A549 (cell line): ENCODE measurements at regions of chr19 and their contacts with region 1.

Region 1: DNA sequence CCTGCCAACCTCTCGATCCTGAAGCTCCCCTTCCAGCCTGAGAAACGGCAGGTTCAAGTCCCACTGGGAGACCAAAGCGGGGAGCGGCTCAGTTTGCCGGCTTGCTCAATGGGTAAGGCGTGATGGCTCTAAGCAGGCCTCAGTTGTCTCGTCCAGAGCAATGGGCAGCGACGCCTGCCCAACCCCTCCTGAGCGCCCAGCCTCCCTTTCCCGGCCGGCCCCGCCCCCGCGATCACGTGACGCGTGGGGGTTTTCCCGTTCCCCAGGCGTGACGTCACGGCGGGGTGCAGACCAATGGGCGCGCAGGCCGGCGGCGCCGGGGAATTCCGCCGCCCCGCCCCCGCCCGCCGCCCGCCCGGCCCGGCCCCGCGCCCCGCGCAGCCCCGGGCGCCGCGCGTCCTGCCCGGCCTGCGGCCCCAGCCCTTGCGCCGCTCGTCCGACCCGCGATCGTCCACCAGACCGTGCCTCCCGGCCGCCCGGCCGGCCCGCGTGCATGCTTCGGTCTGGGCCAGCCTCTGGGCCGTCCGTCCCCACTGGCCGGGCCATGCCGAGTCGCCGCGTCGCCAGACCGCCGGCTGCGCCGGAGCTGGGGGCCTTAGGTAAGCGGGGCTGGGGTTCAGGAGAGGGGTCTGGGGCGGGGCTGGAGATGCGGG is at the start of gene RELB:
- DNase-seq: peak; percentile 93 to 99
- ATAC-seq: peak; percentile 66 to 78
- H3K4me3 ChIP-seq: peak within 1 kb of the TSS; percentile 96
- H3K27ac ChIP-seq: peak within 1 kb of the TSS; percentile 83 to 95
- H3K4me1 ChIP-seq: peaks cover 7% of the 10 kb centered on the region; the same call in 1 of the 3 replicates
- CTCF ChIP-seq: no peak
- EP300 ChIP-seq: no peak
- POLR2A ChIP-seq: no peak; the same call in 1 of the 2 replicates
- RAD21 ChIP-seq: no peak
- polyA plus RNA-seq, gene RELB: 7.5 and 8.1 TPM in 2 replicates

Region 2: DNA sequence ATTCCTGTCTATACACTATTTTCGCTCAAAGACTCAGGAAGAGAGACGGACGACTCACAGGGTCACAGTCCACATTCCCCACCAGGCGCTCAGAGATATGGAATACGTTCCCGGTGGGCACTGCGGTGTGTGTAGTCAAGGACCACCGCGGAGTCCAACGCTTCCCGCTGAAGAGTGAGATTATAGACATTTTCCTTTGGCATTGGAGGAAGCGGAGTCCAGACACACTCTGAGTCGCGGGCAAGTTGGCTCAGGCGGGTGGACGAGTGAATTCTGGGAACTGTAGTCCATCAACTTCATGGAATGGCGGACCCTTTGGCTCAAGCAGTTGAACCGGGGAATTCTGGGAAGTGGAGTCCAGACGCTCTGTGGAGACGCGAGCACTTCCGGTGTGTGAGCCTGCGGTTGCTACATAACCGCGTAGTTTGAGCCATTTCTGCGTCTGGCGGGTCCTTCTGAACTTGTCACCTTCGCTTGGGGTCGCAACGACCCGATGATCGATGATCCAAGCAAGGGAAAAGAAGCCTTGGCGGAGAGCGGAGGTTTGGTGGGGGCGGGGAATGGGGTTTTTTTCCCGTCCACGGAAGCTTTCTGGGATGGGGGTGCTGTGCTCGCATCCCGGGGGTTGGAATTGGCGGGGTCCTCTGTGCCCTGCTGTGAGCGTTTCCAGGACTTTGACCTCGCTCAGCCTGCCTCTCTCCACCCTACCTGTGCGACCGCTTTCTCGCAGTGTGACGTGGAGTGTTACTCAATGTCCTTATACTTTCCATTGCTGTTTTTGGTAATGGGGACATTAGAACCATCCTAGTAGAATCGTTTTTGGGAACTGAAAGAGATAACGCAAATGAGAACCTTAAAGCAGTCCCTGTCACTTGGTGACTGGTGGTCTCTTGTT is 998.4 kb before region 1 on chr19 and contains the start of gene ZNF230:
- CTCF ChIA-PET with region 1: no interaction called
- POLR2A ChIA-PET with region 1: interaction called, 10 read pairs
- DNase-seq: peak; percentile 97 to 98
- ATAC-seq: peak; percentile 98 to 99
- H3K4me3 ChIP-seq: peak within 1 kb of the TSS; percentile 66
- H3K27ac ChIP-seq: peak within 1 kb of the TSS; percentile 74 to 83
- H3K4me1 ChIP-seq: no peaks in the 10 kb centered on the region
- CTCF ChIP-seq: no peak
- EP300 ChIP-seq: no peak
- POLR2A ChIP-seq: peak; percentile 49
- RAD21 ChIP-seq: no peak
- polyA plus RNA-seq, gene ZNF230: 6.2 and 6.3 TPM in 2 replicates

Region 3: GRCh38 chr19:44912854-44913253 is 88.4 kb before region 1 on chr19:
- CTCF ChIA-PET with region 1: no interaction called
- POLR2A ChIA-PET with region 1: no interaction called
- DNase-seq: no peak
- ATAC-seq: no peak
- H3K4me3 ChIP-seq: no peak overlapping the region
- H3K27ac ChIP-seq: peak overlapping the region in 1 of 2 experiments; percentile 92; a peak in 4 of 6 replicates
- H3K4me1 ChIP-seq: peaks cover 36% of the 10 kb centered on the region
- CTCF ChIP-seq: no peak
- EP300 ChIP-seq: no peak
- POLR2A ChIP-seq: no peak
- RAD21 ChIP-seq: no peak

Region 4: GRCh38 chr19:44988896-44989556 is 12.2 kb before region 1 on chr19:
- CTCF ChIA-PET with region 1: interaction called, 26 read pairs
- POLR2A ChIA-PET with region 1: interaction called, 4 read pairs
- DNase-seq: peak; percentile 75 to 85
- ATAC-seq: peak; percentile 60 to 83
- H3K4me3 ChIP-seq: no peak overlapping the region
- H3K27ac ChIP-seq: no peak overlapping the region
- H3K4me1 ChIP-seq: no peaks in the 10 kb centered on the region
- CTCF ChIP-seq: peak; percentile 62
- EP300 ChIP-seq: no peak
- POLR2A ChIP-seq: no peak
- RAD21 ChIP-seq: peak; percentile 44 to 47; a peak in 3 of 5 replicates

Region 5: GRCh38 chr19:45038931-45039893 is 38.0 kb after region 1 on chr19 and contains the start of gene CLASRP:
- CTCF ChIA-PET with region 1: interaction called, 4 read pairs
- POLR2A ChIA-PET with region 1: interaction called, 27 read pairs
- DNase-seq: peak; percentile 90 to 92
- ATAC-seq: peak; percentile 99
- H3K4me3 ChIP-seq: peak within 1 kb of the TSS; percentile 72
- H3K27ac ChIP-seq: peak within 1 kb of the TSS; percentile 85 to 90
- H3K4me1 ChIP-seq: peaks cover 11% of the 10 kb centered on the region
- CTCF ChIP-seq: no peak
- EP300 ChIP-seq: no peak
- POLR2A ChIP-seq: peak; percentile 92
- RAD21 ChIP-seq: no peak
- polyA plus RNA-seq, gene CLASRP: 30.7 and 39.0 TPM in 2 replicates